K562 (cell line): ENCODE measurements at regions of chr19 and their contacts with region 1.

Region 1: GRCh38 chr19:17579661-17580244 is 24.3 kb downstream of the COLGALT1 start:
- DNase-seq: peak; percentile 86 to 97 (median 89)
- ATAC-seq: peak; percentile 88
- H3K4me3 ChIP-seq: peak overlapping the region; percentile 30
- H3K27ac ChIP-seq: peak overlapping the region; percentile 69; the same call in 2 of the 3 replicates
- H3K4me1 ChIP-seq: peaks cover 13 to 56% of the 10 kb centered on the region in 2 experiments
- H3K27me3 ChIP-seq: no peaks in the 10 kb centered on the region
- CTCF ChIP-seq: no peak
- EP300 ChIP-seq: no peak
- POLR2A ChIP-seq: peak; percentile 53
- RAD21 ChIP-seq: no peak

Region 2: DNA sequence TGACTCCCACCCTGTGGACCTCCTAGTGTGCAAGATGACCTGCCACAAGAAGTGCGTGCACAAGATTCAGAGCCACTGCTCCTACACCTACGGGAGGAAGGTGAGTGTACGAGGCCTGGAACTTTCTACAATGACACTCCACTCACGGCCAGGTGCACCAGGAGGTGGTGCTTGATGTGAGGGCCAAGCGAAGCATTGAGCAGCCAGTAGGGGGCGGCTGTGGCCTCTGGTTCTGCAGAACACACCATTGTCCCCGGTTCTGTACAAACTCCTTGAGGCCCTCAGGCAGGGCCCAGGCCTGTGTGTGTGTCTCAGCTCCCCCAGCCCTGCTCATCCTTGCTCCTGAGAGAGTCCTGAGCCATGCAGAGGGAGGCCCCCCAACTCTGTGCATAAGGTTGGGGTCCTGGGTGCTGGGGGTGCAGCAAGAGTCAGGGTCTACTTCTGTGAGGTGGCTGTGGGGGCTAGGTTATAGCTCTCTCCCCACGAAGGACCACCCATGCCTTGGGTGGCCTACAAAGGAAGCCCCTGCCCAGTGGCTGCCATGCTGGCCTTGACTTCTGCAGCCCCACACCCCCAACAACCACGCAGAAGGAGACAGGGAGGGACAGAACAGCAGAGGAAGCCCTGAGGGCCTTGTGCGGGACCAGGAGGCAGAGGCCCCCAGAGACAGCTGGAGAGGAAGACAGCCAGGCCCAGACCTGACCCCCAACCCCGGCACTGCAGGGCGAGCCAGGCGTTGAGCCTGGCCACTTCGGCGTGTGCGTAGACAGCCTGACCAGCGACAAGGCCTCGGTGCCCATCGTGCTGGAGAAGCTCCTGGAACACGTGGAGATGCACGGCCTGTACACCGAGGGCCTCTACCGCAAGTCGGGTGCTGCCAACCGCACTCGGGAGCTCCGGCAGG is 374.3 kb before region 1 on chr19:
- CTCF ChIA-PET with region 1: no interaction called
- POLR2A ChIA-PET with region 1: no interaction called
- in situ Hi-C with region 1: no loop called
- intact Hi-C with region 1: no loop called
- DNase-seq: peak; percentile 64 to 84 (median 70)
- ATAC-seq: peak; percentile 75
- H3K4me3 ChIP-seq: no peak overlapping the region
- H3K27ac ChIP-seq: no peak overlapping the region
- H3K4me1 ChIP-seq: peaks cover 12 to 43% of the 10 kb centered on the region in 2 experiments; a peak in 4 of 5 replicates
- H3K27me3 ChIP-seq: no peaks in the 10 kb centered on the region
- CTCF ChIP-seq: peak; percentile 92 to 96 (median 94)
- EP300 ChIP-seq: no peak
- POLR2A ChIP-seq: no peak
- RAD21 ChIP-seq: peak; percentile 49 to 85; a peak in 3 of 4 replicates

Region 3: DNA sequence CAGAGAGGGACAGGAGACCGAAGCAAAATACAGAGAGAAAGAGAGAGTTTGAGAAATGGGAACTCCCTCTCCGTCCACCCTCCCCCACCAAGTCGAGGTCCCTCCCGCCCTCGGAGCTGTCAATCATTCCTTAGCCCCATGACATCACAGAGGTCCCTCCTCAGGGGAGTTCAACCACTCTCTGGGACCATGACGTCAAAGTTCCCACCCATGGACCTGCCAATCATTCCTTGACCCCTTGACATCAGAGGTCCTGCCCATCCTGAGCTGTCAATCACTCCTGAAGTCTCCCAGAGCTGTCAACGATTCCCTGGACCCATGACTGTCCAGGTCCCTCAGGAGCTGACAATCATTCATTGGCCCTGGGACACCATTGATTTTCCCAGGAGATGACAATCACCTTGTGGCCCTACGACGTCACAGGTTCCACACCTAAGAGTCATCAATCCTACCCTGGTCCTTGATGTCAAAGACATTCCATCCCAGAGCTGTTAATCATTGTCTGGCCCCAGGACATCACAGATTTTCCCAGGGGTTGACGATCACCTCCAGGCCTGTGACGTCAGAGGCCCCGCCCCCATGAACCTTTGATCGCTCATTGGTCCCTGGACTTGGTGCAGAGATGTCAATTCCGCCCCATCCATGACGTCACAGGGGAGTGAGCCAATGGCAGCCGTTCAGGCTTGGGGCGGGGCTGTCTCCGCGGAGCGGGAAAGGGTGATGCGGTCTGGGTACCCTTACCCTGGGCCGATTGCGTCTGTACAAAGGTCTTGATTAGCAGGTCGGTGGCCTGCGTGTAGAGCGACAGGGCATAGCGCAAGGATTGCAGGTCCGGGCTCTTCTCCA is 37.4 kb after region 1 on chr19:
- CTCF ChIA-PET with region 1: no interaction called
- POLR2A ChIA-PET with region 1: interaction called, 3 read pairs
- in situ Hi-C with region 1: no loop called
- intact Hi-C with region 1: loop called (anchors 1 kb)
- DNase-seq: peak; percentile 92 to 97 (median 94)
- ATAC-seq: peak; percentile 91
- H3K4me3 ChIP-seq: peak overlapping the region; percentile 47
- H3K27ac ChIP-seq: peak overlapping the region; percentile 82
- H3K4me1 ChIP-seq: peaks cover 2 to 34% of the 10 kb centered on the region in 2 experiments; a peak in 4 of 5 replicates
- H3K27me3 ChIP-seq: no peaks in the 10 kb centered on the region; a peak in 1 of 5 replicates
- CTCF ChIP-seq: 0 out of 6 replicates have a peak, but pooled peaks of 1 of the 3 experiments have one; percentile 4
- EP300 ChIP-seq: peak; percentile 10; the same call in 1 of the 2 replicates
- POLR2A ChIP-seq: no peak
- RAD21 ChIP-seq: no peak